ENCODE measurements at regions of chr9 and their contacts with region 1.

Region 1: DNA sequence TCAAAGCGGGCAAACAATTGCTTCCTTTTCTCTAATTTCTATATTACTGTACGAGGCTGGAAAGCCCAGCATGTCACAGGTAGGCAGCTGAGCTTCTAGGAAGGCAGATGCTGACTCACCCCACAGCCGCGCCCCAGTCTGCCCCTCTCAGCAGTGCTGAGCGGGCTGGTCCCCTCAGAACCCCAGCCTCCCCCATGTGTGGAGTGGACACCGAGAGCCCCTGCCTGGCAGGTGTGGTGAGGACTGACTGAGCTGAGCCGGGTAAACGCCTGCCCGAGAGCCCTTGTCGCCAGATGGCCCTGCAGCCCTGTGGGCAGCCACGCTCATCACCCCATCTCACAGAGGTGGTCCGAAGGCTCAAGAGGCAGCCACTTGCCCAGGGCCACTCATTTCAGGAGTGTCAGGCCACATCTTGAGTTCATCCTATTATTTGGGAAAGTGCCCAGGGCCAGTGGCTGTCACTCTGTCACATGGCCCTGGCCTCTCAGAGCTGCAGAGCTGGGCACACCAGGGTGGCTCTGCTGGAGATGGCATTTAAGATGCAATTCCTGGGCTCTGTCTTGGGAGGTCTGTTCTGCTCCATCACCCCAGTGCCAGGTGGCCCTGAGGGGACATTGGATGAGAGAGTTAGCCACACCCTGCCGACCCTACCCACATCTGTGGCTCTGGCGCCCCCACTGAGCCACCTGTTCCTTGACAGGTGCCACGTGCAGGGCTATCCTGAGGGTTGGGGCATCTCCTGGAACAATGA is 12.4 kb downstream of the CARD19 start:
- DNase-seq: peak in 2 of 4 experiments; percentile 39 to 46
- ATAC-seq: peak; percentile 64
- H3K4me3 ChIP-seq: no peak overlapping the region
- H3K27ac ChIP-seq: no peak overlapping the region
- H3K4me1 ChIP-seq: peaks cover 24 to 44% of the 10 kb centered on the region in 2 experiments
- H3K27me3 ChIP-seq: no peaks in the 10 kb centered on the region
- CTCF ChIP-seq: no peak
- EP300 ChIP-seq: no peak
- POLR2A ChIP-seq: no peak
- RAD21 ChIP-seq: no peak

Region 2: GRCh38 chr9:92954886-92955285 is 153.6 kb before region 1 on chr9:
- CTCF ChIA-PET with region 1: interaction called, 3 read pairs
- POLR2A ChIA-PET with region 1: no interaction called
- in situ Hi-C with region 1: no loop called
- intact Hi-C with region 1: loop called (anchors 5 kb)
- DNase-seq: no peak
- ATAC-seq: no peak
- H3K4me3 ChIP-seq: no peak overlapping the region
- H3K27ac ChIP-seq: no peak overlapping the region
- H3K4me1 ChIP-seq: no peaks in the 10 kb centered on the region
- H3K27me3 ChIP-seq: peaks cover 23 to 26% of the 10 kb centered on the region in 2 experiments
- CTCF ChIP-seq: no peak
- EP300 ChIP-seq: no peak
- POLR2A ChIP-seq: no peak
- RAD21 ChIP-seq: no peak

Region 3: GRCh38 chr9:93095205-93096130 is 13.0 kb before region 1 on chr9:
- CTCF ChIA-PET with region 1: no interaction called
- POLR2A ChIA-PET with region 1: interaction called, 16 read pairs
- in situ Hi-C with region 1: no loop called
- intact Hi-C with region 1: no loop called
- DNase-seq: peak; percentile 96 to 99 (median 98)
- ATAC-seq: peak; percentile 93
- H3K4me3 ChIP-seq: peak overlapping the region; percentile 75
- H3K27ac ChIP-seq: peak overlapping the region; percentile 99
- H3K4me1 ChIP-seq: peaks cover 26 to 52% of the 10 kb centered on the region in 2 experiments
- H3K27me3 ChIP-seq: no peaks in the 10 kb centered on the region
- CTCF ChIP-seq: 0 out of 6 replicates have a peak, but pooled peaks of 1 of the 3 experiments have one; percentile 17
- EP300 ChIP-seq: no peak
- POLR2A ChIP-seq: peak; percentile 89
- RAD21 ChIP-seq: no peak

Region 4: DNA sequence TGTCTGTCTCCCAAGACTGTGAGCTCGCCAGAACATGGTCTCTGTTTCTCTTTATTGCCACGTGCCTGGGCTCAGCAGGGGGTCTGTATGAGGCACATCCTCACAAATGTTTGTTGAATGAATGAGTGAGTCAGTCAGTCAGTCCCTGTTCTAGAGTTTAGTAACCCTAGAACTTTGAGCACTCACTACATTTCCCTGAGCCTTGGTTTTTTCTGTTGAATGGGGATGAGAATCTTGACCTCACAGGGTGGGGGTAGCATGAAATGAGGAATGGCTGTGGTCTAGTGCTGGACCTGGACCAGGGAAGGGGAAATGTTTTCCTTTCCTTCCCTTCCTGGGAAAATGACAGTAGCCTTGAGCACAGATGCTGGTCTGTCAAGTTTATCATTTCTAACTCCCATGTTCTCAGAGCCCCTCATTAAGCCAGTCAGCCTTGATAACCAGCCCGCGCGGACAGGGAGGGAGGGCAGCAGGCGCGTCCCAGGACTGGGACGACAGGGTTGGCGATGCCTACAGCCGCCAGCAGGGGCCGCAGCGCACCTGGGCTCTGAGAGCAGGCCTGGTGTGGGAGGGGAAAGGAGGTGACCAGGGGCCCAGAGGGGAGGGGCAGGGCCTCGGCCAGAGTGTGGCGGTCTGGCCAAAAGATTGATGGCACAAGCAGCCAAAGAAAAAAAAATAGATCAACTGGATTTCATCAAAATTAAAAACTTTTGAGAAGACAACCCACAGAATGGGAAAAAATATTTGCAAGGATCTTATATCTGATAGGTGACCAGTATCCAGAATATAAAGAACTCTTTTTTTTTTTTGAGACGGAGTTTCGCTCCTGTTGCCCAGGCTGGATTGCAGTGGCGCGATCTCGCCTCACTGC is 51.4 kb after region 1 on chr9:
- CTCF ChIA-PET with region 1: no interaction called
- POLR2A ChIA-PET with region 1: interaction called, 3 read pairs
- in situ Hi-C with region 1: no loop called
- intact Hi-C with region 1: loop called (anchors 2 kb)
- DNase-seq: peak; percentile 90 to 96 (median 94)
- ATAC-seq: peak; percentile 100
- H3K4me3 ChIP-seq: no peak overlapping the region
- H3K27ac ChIP-seq: no peak overlapping the region
- H3K4me1 ChIP-seq: peaks cover 0 to 9% of the 10 kb centered on the region in 2 experiments; a peak in 3 of 5 replicates
- H3K27me3 ChIP-seq: peaks cover 16 to 38% of the 10 kb centered on the region in 2 experiments
- CTCF ChIP-seq: peak; percentile 95 to 98 (median 97)
- EP300 ChIP-seq: no peak
- POLR2A ChIP-seq: no peak
- RAD21 ChIP-seq: peak; percentile 96

Region 5: GRCh38 chr9:93217706-93218105 is 109.2 kb after region 1 on chr9:
- CTCF ChIA-PET with region 1: no interaction called
- POLR2A ChIA-PET with region 1: no interaction called
- in situ Hi-C with region 1: no loop called
- intact Hi-C with region 1: no loop called
- DNase-seq: no peak
- ATAC-seq: no peak
- H3K4me3 ChIP-seq: no peak overlapping the region
- H3K27ac ChIP-seq: no peak overlapping the region
- H3K4me1 ChIP-seq: no peaks in the 10 kb centered on the region
- H3K27me3 ChIP-seq: peaks cover 10 to 42% of the 10 kb centered on the region in 2 experiments; a peak in 4 of 5 replicates
- CTCF ChIP-seq: no peak
- EP300 ChIP-seq: no peak
- POLR2A ChIP-seq: no peak
- RAD21 ChIP-seq: no peak

Region 6: GRCh38 chr9:93309889-93310425 is 201.5 kb after region 1 on chr9:
- CTCF ChIA-PET with region 1: interaction called, 11 read pairs
- POLR2A ChIA-PET with region 1: no interaction called
- in situ Hi-C with region 1: loop called (anchors 10 kb)
- intact Hi-C with region 1: loop called (anchors 5 kb)
- DNase-seq: no peak
- ATAC-seq: no peak
- H3K4me3 ChIP-seq: no peak overlapping the region
- H3K27ac ChIP-seq: no peak overlapping the region
- H3K4me1 ChIP-seq: peaks cover 0 to 6% of the 10 kb centered on the region in 2 experiments; a peak in 2 of 5 replicates
- H3K27me3 ChIP-seq: peaks cover 30 to 45% of the 10 kb centered on the region in 2 experiments
- CTCF ChIP-seq: no peak
- EP300 ChIP-seq: no peak
- POLR2A ChIP-seq: no peak
- RAD21 ChIP-seq: no peak

Measured in K562 (cell line).